ENCODE measurements at regions of chr1 and their contacts with region 1.

Region 1: DNA sequence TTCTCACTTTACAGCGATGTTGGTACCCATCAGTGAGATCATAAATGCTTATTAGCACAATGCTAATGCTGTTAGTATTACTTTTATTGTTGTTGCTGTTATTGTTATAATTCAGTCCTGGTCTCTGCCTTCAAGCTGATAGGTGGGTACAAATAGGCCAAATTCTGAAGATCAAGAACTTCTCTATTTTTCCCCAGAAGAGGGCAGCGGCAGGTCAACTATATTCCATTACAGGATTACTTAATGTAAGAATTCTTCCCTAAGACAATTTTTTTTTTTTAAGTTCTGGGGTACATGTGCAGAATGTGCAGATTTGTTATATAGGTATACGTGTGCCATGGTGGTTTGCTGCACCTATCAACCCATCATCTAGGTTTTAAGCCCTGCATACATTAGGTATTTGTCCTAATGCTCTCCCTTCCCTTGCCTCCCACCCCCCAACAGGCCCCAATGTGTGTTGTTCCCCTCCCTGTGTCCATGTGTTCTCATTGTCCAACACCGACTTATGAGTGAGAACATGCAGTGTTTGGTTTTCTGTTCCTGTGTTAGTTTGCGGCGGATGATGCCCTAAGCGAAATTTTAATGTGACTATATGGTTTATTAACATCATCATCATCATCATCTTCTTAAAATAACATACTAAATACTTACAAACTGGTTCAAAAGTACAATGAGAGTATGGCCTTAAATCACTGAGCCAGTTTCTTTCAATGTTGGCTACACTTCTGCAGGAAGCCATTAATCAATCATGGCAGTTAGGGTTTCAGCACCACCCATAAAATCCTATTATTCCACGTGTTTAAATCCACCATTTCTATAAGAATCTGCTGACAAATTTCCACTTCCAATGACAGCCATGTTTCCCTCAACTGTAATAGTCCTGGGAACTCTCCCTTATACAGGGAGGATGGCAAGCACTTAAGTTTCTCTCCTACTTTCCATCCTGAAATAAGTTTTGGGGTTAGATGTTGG is 19.2 kb downstream of the SLC19A2 start:
- DNase-seq: peak; percentile 23
- H3K4me3 ChIP-seq: no peak overlapping the region
- H3K27ac ChIP-seq: no peak overlapping the region
- H3K4me1 ChIP-seq: no peaks in the 10 kb centered on the region
- H3K27me3 ChIP-seq: no peaks in the 10 kb centered on the region
- CTCF ChIP-seq: peak; percentile 29 to 48

Region 2: GRCh38 chr1:169201084-169201619 is 265.4 kb before region 1 on chr1:
- CTCF ChIA-PET with region 1: no interaction called
- dilution Hi-C with region 1: no loop called
- in situ Hi-C with region 1: no loop called
- intact Hi-C with region 1: no loop called
- DNase-seq: peak; percentile 58
- H3K4me3 ChIP-seq: no peak overlapping the region
- H3K27ac ChIP-seq: no peak overlapping the region
- H3K4me1 ChIP-seq: peaks cover 26% of the 10 kb centered on the region
- H3K27me3 ChIP-seq: no peaks in the 10 kb centered on the region
- CTCF ChIP-seq: no peak

Region 3: DNA sequence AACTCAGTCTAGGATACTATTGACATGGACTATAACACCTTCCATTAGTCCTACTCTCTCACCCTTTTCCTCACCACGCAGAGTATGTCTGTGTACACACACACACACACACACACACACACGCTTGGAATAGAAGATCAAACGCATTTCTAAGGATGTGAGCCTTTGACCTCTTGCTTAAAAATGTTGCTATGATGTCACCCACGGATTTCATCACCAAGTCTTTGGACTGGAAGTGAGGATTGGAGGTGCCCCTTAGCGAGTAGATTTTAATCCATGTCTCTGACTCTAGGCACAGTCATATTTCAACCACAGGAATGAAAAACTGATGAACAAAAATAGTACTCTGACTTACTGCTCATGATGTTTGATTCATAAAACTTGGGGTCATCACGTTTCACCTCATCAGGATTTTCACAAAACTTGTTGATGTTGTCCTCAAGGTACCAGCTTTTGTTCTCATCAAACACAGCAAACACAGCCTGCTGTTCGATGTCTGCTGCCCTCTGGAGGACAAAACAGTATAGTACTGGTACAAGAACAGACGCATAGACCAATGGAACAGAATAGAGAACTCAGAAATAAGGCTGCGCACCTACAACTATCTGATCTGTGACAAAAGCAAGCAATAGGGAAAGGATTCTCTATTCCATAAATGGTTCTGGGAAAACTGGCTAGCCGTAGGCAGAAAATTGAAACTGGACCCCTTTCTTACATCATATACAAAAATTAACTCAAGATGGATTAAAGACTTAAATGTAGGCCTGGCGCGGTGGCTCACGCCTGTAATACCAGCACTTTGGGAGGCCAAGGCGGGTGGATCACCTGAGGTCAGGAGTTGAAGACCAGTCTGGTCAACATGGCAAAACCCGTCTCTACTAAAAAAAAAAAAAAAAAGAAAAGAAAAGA is 79.8 kb after region 1 on chr1:
- CTCF ChIA-PET with region 1: no interaction called
- dilution Hi-C with region 1: no loop called
- in situ Hi-C with region 1: no loop called
- intact Hi-C with region 1: loop called (anchors 1 kb)
- DNase-seq: peak; percentile 59
- H3K4me3 ChIP-seq: no peak overlapping the region
- H3K27ac ChIP-seq: no peak overlapping the region
- H3K4me1 ChIP-seq: no peaks in the 10 kb centered on the region
- H3K27me3 ChIP-seq: no peaks in the 10 kb centered on the region
- CTCF ChIP-seq: peak; percentile 76 to 85

Region 4: DNA sequence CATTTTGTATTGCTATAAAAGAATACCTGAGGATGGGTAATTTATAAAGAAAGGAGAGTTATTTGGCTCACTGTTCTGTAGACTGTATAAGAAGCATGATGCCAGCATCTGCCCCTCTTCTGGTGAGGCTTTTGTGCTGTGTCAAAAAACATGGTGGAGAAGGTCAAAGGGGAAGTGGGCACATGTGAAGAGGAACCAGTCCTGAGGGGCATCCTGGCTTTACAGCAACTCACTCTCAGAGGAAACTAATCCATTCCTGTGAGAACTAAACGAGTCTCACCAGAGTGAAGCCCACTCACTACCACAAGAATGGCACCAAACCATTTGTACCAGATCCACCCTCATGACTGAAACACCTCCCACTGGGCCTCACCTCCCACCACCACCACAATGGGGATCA is 182.2 kb after region 1 on chr1:
- CTCF ChIA-PET with region 1: no interaction called
- dilution Hi-C with region 1: no loop called
- in situ Hi-C with region 1: no loop called
- intact Hi-C with region 1: no loop called
- DNase-seq: no peak
- H3K4me3 ChIP-seq: no peak overlapping the region
- H3K27ac ChIP-seq: no peak overlapping the region
- H3K4me1 ChIP-seq: no peaks in the 10 kb centered on the region
- H3K27me3 ChIP-seq: no peaks in the 10 kb centered on the region
- CTCF ChIP-seq: no peak

Measured in mammary epithelial cell (primary cell).